ENCODE measurements at regions of chr12 and their contacts with region 1.

Region 1: GRCh38 chr12:39103552-39104165 is 198.3 kb upstream of the CPNE8 start:
- DNase-seq: no peak
- ATAC-seq: peak; percentile 94

Region 2: GRCh38 chr12:38332814-38333213 is 770.8 kb before region 1 on chr12:
- intact Hi-C with region 1: loop called (anchors 5 kb)
- DNase-seq: no peak
- ATAC-seq: no peak

Region 3: DNA sequence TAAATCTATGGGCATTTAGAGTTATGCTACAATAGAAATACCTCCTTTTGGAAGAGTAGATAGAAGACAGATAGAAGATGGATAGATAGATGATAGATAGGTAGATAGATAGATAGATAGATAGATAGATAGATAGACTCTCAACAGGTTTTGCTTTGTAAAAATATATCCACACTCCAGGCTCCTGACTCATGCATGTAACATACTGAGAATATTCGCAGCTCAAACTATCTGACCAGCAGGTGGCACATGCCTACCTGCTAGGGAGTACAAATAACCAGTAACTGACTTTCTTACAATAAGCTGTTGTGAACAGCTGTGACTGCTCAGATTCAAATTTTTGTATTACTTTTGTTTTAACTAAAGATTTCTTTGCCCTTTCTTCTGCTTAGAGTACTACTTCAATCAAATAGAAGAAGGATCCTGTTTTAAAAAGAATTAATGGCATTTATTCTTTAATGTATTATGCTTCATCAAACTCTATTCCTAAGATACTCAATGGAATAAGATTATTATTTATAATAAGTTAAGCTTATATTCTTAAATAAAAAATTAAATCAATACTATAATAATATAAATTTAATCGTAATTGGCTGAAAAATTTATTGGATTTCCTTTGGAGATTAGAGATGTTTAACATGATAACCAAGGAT is 182.5 kb before region 1 on chr12:
- intact Hi-C with region 1: loop called (anchors 5 kb)
- DNase-seq: peak; percentile 41
- ATAC-seq: peak; percentile 84

Region 4: DNA sequence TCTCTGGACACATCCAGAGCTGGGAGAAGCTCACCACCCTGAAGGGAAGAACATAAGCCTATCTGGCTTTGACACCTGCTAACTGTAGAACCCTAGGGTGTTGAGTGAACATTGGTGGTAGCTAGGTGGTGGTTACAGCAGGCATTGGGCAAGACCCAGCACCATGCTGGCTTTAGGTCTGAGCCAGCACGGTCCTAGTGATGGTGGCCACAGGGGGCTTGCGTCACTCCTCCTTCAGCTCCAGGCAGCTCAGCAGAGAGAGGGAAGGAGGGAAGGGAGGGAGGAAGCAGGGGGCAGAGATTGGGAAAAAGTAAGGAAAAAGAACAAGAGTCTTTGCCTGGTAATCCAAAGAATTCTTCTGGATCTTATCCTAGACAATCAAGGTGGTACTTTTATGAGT is 83.4 kb before region 1 on chr12:
- intact Hi-C with region 1: no loop called
- DNase-seq: no peak
- ATAC-seq: no peak

Measured in Right ventricle myocardium superior (tissue), 1 donor.